ENCODE measurements at regions of chr1 and their contacts with region 1.

Region 1: DNA sequence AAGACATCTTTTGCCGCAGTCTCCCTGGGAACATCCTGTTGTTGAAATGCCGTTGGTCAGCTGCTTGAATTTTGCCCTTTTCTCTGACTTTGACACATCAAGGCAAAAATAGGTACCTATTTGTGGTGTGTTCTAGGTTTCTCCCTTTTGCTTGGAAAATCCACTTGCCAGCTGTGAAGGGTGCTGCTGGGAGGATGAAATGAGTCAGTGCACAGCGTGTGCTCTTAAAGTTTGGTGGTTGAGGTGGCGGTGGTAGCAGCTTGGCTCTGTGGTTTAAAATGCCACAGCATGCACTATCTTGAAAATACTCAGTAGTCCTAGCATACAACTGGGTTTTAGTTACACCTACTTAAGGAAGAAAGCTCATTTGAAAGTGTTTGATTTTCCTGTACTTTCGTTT is 183.8 kb downstream of the DHRS3 start:
- DNase-seq: peak in 8 of 9 experiments; percentile 37 to 86 (median 62)
- ATAC-seq: peak; percentile 69
- H3K4me3 ChIP-seq: peak overlapping the region in 1 of 2 experiments; percentile 32
- H3K4me3 Mint-ChIP-seq: peak overlapping the region; percentile 54
- H3K27ac ChIP-seq: peak overlapping the region in 1 of 2 experiments; percentile 74
- H3K27ac Mint-ChIP-seq: peak overlapping the region; percentile 87
- H3K4me1 ChIP-seq: peaks cover 59% of the 10 kb centered on the region
- H3K4me1 Mint-ChIP-seq: peaks cover 79% of the 10 kb centered on the region
- H3K27me3 ChIP-seq: no peaks in the 10 kb centered on the region
- H3K27me3 Mint-ChIP-seq: no peaks in the 10 kb centered on the region
- CTCF ChIP-seq: no peak

Region 2: GRCh38 chr1:10941891-10942541 is 1492.2 kb before region 1 on chr1:
- CTCF ChIA-PET with region 1: no interaction called
- POLR2A ChIA-PET with region 1: no interaction called
- intact Hi-C with region 1: no loop called
- DNase-seq: peak; percentile 47 to 78 (median 70)
- ATAC-seq: peak; percentile 75
- H3K4me3 ChIP-seq: no peak overlapping the region
- H3K4me3 Mint-ChIP-seq: no peak overlapping the region
- H3K27ac ChIP-seq: no peak overlapping the region
- H3K27ac Mint-ChIP-seq: no peak overlapping the region
- H3K4me1 ChIP-seq: peaks cover 43% of the 10 kb centered on the region
- H3K4me1 Mint-ChIP-seq: peaks cover 41% of the 10 kb centered on the region
- H3K27me3 ChIP-seq: peaks cover 6 to 7% of the 10 kb centered on the region in 2 experiments
- H3K27me3 Mint-ChIP-seq: peaks cover 25% of the 10 kb centered on the region
- CTCF ChIP-seq: peak; percentile 82

Region 3: GRCh38 chr1:12356004-12356890 is 77.9 kb before region 1 on chr1:
- CTCF ChIA-PET with region 1: no interaction called
- POLR2A ChIA-PET with region 1: no interaction called
- intact Hi-C with region 1: no loop called
- DNase-seq: no peak
- ATAC-seq: no peak
- H3K4me3 ChIP-seq: no peak overlapping the region
- H3K4me3 Mint-ChIP-seq: no peak overlapping the region
- H3K27ac ChIP-seq: no peak overlapping the region
- H3K27ac Mint-ChIP-seq: no peak overlapping the region
- H3K4me1 ChIP-seq: no peaks in the 10 kb centered on the region
- H3K4me1 Mint-ChIP-seq: no peaks in the 10 kb centered on the region
- H3K27me3 ChIP-seq: no peaks in the 10 kb centered on the region
- H3K27me3 Mint-ChIP-seq: no peaks in the 10 kb centered on the region
- CTCF ChIP-seq: no peak

Region 4: DNA sequence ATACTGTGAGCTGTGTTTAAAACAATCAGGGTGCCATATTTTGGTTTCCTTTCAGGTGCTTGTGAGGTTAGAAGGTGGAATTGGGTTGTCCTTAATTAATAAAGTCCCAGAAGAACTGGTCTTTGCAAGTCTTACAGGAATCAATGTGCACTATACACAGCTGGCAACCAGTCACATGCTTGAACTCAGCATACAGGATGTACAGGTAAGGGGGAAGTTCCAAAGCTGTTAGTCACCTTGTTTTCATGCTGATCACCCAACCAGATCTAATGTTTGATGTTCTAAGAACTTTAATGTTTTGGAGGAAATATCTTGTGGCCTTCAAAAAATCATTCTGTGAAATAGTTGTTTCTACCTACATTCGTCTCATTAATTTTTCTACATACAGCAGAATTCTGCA is 48.0 kb before region 1 on chr1:
- CTCF ChIA-PET with region 1: no interaction called
- POLR2A ChIA-PET with region 1: interaction called, 4 read pairs
- intact Hi-C with region 1: loop called in 1 of 2 experiments (anchors 10 kb)
- DNase-seq: peak in 5 of 9 experiments; percentile 14 to 60 (median 40)
- ATAC-seq: peak; percentile 90
- H3K4me3 ChIP-seq: no peak overlapping the region
- H3K4me3 Mint-ChIP-seq: peak overlapping the region; percentile 38
- H3K27ac ChIP-seq: peak overlapping the region in 1 of 2 experiments; percentile 15
- H3K27ac Mint-ChIP-seq: peak overlapping the region; percentile 88
- H3K4me1 ChIP-seq: peaks cover 19% of the 10 kb centered on the region
- H3K4me1 Mint-ChIP-seq: peaks cover 35% of the 10 kb centered on the region
- H3K27me3 ChIP-seq: no peaks in the 10 kb centered on the region
- H3K27me3 Mint-ChIP-seq: no peaks in the 10 kb centered on the region
- CTCF ChIP-seq: no peak

Region 5: DNA sequence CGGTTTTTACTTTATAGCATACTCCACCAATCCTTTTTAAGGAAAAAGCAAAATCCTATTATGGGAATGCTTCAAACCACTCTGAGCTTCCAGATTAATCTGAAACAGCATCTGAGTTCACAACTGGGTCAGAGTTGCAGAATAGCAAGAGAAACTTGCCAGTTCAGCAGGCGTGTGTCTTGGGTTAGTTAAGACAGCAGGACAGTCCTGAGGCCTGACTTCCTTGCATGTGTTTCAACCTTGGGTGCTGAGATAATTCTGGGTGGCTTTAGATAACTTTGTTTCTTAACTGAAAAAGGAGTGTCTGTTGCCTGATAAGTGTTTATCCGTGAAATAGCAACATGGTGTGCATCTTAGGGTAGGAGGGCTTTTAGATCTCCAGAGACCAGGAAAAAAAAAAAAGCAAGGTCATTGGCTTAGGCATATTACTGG is 14.6 kb after region 1 on chr1:
- CTCF ChIA-PET with region 1: interaction called, 4 read pairs
- POLR2A ChIA-PET with region 1: interaction called, 4 read pairs
- intact Hi-C with region 1: loop called in 1 of 2 experiments (anchors 1 kb)
- DNase-seq: no peak
- ATAC-seq: no peak
- H3K4me3 ChIP-seq: peak overlapping the region in 1 of 2 experiments; percentile 0
- H3K4me3 Mint-ChIP-seq: peak overlapping the region; percentile 73
- H3K27ac ChIP-seq: peak overlapping the region; percentile 26 to 56
- H3K27ac Mint-ChIP-seq: peak overlapping the region; percentile 96
- H3K4me1 ChIP-seq: peaks cover 71% of the 10 kb centered on the region
- H3K4me1 Mint-ChIP-seq: peaks cover 76% of the 10 kb centered on the region
- H3K27me3 ChIP-seq: no peaks in the 10 kb centered on the region
- H3K27me3 Mint-ChIP-seq: no peaks in the 10 kb centered on the region
- CTCF ChIP-seq: no peak

Region 6: GRCh38 chr1:12477936-12478611 is 43.9 kb after region 1 on chr1:
- CTCF ChIA-PET with region 1: interaction called, 3 read pairs
- POLR2A ChIA-PET with region 1: interaction called, 5 read pairs
- intact Hi-C with region 1: loop called (anchors 5 kb)
- DNase-seq: peak in 2 of 9 experiments; percentile 40 to 54
- ATAC-seq: peak; percentile 19
- H3K4me3 ChIP-seq: no peak overlapping the region
- H3K4me3 Mint-ChIP-seq: peak overlapping the region; percentile 72
- H3K27ac ChIP-seq: peak overlapping the region; percentile 6 to 63
- H3K27ac Mint-ChIP-seq: peak overlapping the region; percentile 97
- H3K4me1 ChIP-seq: peaks cover 90% of the 10 kb centered on the region
- H3K4me1 Mint-ChIP-seq: peaks cover 90% of the 10 kb centered on the region
- H3K27me3 ChIP-seq: no peaks in the 10 kb centered on the region
- H3K27me3 Mint-ChIP-seq: no peaks in the 10 kb centered on the region
- CTCF ChIP-seq: no peak

Region 7: DNA sequence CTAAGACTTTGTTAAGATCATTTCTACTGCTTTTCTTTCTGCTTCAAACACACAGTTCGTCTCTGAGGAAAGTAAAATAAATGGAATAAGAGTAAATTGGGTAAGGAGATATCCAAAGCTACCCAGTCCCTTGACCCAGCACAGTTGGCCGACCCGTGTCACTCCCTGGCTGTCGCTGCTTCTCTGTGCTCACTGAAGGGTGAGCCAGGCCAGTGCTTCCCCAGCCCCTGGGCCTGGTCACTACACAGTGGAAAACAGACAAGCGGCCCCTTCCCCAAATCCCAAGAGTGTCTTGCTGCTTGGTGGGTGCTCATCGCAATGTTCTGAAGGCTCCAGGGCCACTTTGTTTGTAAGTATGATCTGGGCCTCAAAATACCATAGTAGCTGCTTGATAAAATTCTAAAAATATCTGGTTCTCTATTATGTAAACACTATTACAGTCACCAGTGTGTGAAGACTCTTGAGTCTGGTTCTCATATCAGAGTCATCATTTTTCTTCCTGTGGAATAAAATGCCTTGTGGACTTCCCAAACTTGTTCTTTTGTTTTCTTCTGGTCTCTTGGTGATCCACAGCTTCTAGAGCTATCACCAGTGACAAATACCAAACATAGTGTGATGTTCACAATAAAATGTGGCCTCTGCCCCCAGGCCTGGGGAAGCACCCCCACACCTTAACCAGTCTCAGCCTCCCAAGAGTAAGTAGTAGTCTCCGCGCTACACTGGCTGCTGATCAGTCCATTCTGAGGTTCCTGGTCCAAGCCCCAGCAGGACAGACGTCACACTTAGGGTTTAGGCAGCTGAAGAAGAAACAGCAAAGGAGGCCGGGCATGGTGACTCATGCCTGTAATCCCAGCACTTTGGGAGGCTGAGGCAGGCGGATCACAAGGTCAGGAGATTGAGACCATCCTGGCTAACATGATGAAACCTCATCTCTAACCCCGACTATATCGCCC is 77.6 kb after region 1 on chr1:
- CTCF ChIA-PET with region 1: no interaction called
- POLR2A ChIA-PET with region 1: interaction called, 4 read pairs
- intact Hi-C with region 1: loop called in 1 of 2 experiments (anchors 1 kb)
- DNase-seq: no peak
- ATAC-seq: no peak
- H3K4me3 ChIP-seq: peak overlapping the region in 1 of 2 experiments; percentile 20
- H3K4me3 Mint-ChIP-seq: peak overlapping the region; percentile 75
- H3K27ac ChIP-seq: peak overlapping the region; percentile 64 to 77
- H3K27ac Mint-ChIP-seq: peak overlapping the region; percentile 98
- H3K4me1 ChIP-seq: peaks cover 34% of the 10 kb centered on the region
- H3K4me1 Mint-ChIP-seq: peaks cover 52% of the 10 kb centered on the region
- H3K27me3 ChIP-seq: no peaks in the 10 kb centered on the region
- H3K27me3 Mint-ChIP-seq: no peaks in the 10 kb centered on the region
- CTCF ChIP-seq: no peak